A673 (cell line): ENCODE measurements at regions of chr15 and their contacts with region 1.

Region 1: DNA sequence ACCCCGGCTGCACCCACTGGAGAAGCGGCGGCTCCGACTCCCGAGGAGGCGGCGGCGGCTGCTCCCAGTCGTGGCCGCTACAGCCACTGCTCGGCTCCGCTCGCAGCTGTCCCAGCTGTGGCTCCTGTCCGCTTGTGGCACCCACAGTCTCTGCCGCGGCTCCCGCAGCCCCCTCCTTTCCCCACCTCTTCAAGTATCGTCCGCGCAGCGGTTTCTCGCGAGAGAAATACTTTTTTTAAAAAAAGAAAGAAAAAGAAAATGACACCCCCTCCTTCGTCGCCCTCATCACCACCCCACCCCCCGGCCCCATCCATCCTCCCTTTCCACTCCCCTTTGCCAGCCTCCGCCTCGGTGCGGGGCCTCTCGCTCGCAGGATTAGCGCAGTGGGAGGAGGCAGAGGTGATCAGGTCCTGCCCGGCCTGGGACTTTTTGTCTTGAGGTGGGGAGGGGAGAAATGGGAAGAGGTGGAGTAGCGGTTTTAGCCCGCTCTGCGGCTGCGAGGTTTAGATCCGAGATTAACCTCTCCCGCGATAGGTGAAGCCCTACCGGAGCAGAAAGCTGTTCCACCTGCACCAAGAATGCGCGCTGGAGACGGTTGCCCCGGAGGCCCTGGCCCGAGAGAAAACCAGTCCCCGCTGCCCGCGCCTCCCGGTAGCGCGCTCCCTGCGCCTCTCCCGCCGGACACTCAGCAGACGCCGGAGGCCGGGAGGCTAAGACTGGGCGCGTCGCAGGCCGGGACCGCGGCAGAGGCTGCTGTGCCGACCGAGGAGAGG is at the start of gene FBN1:
- DNase-seq: peak; percentile 90
- H3K4me3 ChIP-seq: peak within 1 kb of the TSS; percentile 87
- H3K27ac ChIP-seq: peak within 1 kb of the TSS; percentile 63
- H3K4me1 ChIP-seq: peaks cover 13% of the 10 kb centered on the region
- H3K27me3 ChIP-seq: no peaks in the 10 kb centered on the region
- CTCF ChIP-seq: no peak
- total RNA-seq, gene FBN1: 25.4 and 25.8 TPM in 2 replicates

Region 2: DNA sequence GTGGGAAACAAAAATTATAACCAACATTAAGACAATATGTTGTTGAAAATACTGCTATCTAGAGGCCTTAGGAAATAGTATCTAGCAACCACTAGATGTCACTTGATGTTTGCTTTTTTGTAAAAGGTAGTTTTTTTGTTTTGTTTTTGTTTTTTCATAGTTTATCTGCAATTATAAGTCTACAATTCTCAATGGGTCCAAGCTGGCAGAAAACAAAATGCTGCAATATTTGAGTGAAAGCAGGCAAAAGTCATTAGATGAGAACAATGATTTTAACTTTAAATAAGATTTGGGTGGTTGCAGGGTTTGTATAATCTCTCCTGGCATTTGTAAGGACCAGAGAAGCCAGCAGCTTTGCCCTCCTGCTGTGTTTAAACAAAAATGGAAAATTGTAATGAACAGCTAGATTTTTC is 287.5 kb before region 1 on chr15:
- CTCF ChIA-PET with region 1: interaction called, 8 read pairs
- POLR2A ChIA-PET with region 1: no interaction called
- intact Hi-C with region 1: loop called (anchors 2 kb)
- DNase-seq: peak; percentile 68
- H3K4me3 ChIP-seq: peak overlapping the region; percentile 14
- H3K27ac ChIP-seq: peak overlapping the region; percentile 55
- H3K4me1 ChIP-seq: peaks cover 30% of the 10 kb centered on the region
- H3K27me3 ChIP-seq: no peaks in the 10 kb centered on the region
- CTCF ChIP-seq: peak; percentile 82

Region 3: GRCh38 chr15:48507416-48508065 is 138.2 kb before region 1 on chr15:
- CTCF ChIA-PET with region 1: no interaction called
- POLR2A ChIA-PET with region 1: no interaction called
- intact Hi-C with region 1: loop called (anchors 10 kb)
- DNase-seq: peak; percentile 70
- H3K4me3 ChIP-seq: no peak overlapping the region
- H3K27ac ChIP-seq: no peak overlapping the region
- H3K4me1 ChIP-seq: no peaks in the 10 kb centered on the region
- H3K27me3 ChIP-seq: no peaks in the 10 kb centered on the region
- CTCF ChIP-seq: peak; percentile 84

Region 4: GRCh38 chr15:48582452-48583247 is 63.1 kb before region 1 on chr15:
- CTCF ChIA-PET with region 1: interaction called, 16 read pairs
- POLR2A ChIA-PET with region 1: no interaction called
- intact Hi-C with region 1: no loop called
- DNase-seq: peak; percentile 81
- H3K4me3 ChIP-seq: no peak overlapping the region
- H3K27ac ChIP-seq: no peak overlapping the region
- H3K4me1 ChIP-seq: peaks cover 31% of the 10 kb centered on the region
- H3K27me3 ChIP-seq: no peaks in the 10 kb centered on the region
- CTCF ChIP-seq: no peak

Region 5: GRCh38 chr15:48800811-48801455 is 155.2 kb after region 1 on chr15:
- CTCF ChIA-PET with region 1: no interaction called
- POLR2A ChIA-PET with region 1: no interaction called
- intact Hi-C with region 1: loop called (anchors 5 kb)
- DNase-seq: peak; percentile 50
- H3K4me3 ChIP-seq: no peak overlapping the region
- H3K27ac ChIP-seq: peak overlapping the region; percentile 39
- H3K4me1 ChIP-seq: peaks cover 55% of the 10 kb centered on the region
- H3K27me3 ChIP-seq: no peaks in the 10 kb centered on the region
- CTCF ChIP-seq: peak; percentile 70